B cell (primary cell): ENCODE measurements at regions of chr13 and their contacts with region 1.

Region 1: GRCh38 chr13:79541426-79542049 is 60.6 kb downstream of the NDFIP2 start:
- DNase-seq: peak; percentile 72
- ATAC-seq: no peak
- H3K4me3 ChIP-seq: no peak overlapping the region
- H3K4me3 Mint-ChIP-seq: no peak overlapping the region
- H3K27ac ChIP-seq: no peak overlapping the region
- H3K27ac Mint-ChIP-seq: no peak overlapping the region
- H3K4me1 ChIP-seq: no peaks in the 10 kb centered on the region
- H3K4me1 Mint-ChIP-seq: no peaks in the 10 kb centered on the region
- H3K27me3 ChIP-seq: no peaks in the 10 kb centered on the region
- H3K27me3 Mint-ChIP-seq: no peaks in the 10 kb centered on the region
- CTCF ChIP-seq: peak; percentile 99

Region 2: DNA sequence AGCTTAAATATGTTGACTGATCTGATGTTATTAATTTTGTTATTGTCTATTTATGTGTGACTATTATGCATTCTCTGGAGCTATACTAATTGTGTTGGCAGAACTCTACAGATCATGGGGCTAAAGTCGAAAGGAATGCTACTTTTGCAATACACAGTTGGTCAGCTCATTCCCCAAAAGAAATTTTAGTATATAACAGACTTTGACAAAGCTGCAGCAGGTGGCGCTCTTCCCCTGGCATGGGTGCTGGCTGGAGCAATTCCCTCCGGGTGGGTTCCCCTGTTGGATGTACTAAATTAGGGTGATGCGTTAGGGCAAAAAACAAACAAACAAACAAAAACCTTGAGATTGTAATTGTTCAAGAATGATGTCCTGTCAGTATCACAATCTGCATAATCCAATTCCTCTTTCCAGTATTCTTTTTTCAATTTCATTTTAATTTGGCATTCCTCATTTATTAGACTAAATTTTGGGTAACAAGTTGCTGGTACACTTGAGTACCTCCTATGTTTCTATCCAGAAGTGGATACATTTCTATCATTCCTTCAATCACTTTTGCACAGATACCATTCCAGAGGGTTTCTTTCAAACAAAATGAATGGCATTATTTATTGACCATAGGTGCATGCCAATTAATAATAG is 1300.1 kb before region 1 on chr13:
- CTCF ChIA-PET with region 1: interaction called, 10 read pairs
- POLR2A ChIA-PET with region 1: no interaction called
- intact Hi-C with region 1: loop called (anchors 10 kb)
- DNase-seq: peak; percentile 6
- ATAC-seq: no peak
- H3K4me3 ChIP-seq: no peak overlapping the region
- H3K4me3 Mint-ChIP-seq: no peak overlapping the region
- H3K27ac ChIP-seq: no peak overlapping the region
- H3K27ac Mint-ChIP-seq: no peak overlapping the region
- H3K4me1 ChIP-seq: no peaks in the 10 kb centered on the region
- H3K4me1 Mint-ChIP-seq: no peaks in the 10 kb centered on the region
- H3K27me3 ChIP-seq: no peaks in the 10 kb centered on the region
- H3K27me3 Mint-ChIP-seq: no peaks in the 10 kb centered on the region
- CTCF ChIP-seq: peak; percentile 39